Uterus (tissue), 4 donors: ENCODE measurements at regions of chr15 and their contacts with region 1.

Region 1: GRCh38 chr15:73972984-73973682 is 19.0 kb downstream of the STOML1 start:
- DNase-seq: peak; percentile 86 to 88
- H3K4me3 ChIP-seq: no peak overlapping the region
- H3K27ac ChIP-seq: no peak overlapping the region
- H3K4me1 ChIP-seq: peaks cover 0 to 8% of the 10 kb centered on the region in 2 donors
- H3K27me3 ChIP-seq: no peaks in the 10 kb centered on the region
- CTCF ChIP-seq: peak; percentile 88 to 97 (median 93)
- POLR2A ChIP-seq: no peak

Region 2: DNA sequence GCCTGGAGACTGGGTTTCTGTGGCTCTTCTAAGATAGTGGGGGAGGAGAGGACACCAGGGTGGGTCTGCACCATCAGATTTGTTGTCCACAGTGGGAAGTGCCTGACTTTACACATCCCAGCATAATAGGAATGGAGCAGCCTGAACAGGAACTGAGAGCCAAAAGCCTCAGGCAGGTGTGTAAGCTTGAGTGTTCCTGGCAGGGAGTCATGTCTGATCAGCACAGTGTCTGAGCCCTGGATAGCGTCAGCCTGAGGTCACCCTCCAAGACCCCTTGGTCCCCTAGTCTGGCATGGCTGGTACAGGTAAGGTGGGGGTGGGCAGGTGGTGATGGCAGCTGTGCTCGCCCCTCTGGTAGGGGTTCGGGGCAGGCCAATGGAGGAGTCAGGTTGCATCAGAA is 240.2 kb before region 1 on chr15:
- intact Hi-C with region 1: no loop called
- DNase-seq: no peak
- H3K4me3 ChIP-seq: no peak overlapping the region
- H3K27ac ChIP-seq: no peak overlapping the region
- H3K4me1 ChIP-seq: no peaks in the 10 kb centered on the region
- H3K27me3 ChIP-seq: no peaks in the 10 kb centered on the region
- CTCF ChIP-seq: no peak
- POLR2A ChIP-seq: no peak

Region 3: GRCh38 chr15:74036271-74037170 is 63.4 kb after region 1 on chr15:
- intact Hi-C with region 1: loop called (anchors 10 kb)
- DNase-seq: peak; percentile 78 to 83
- H3K4me3 ChIP-seq: no peak overlapping the region
- H3K27ac ChIP-seq: peak overlapping the region; percentile 19 to 36
- H3K4me1 ChIP-seq: peaks cover 0 to 11% of the 10 kb centered on the region in 2 donors
- H3K27me3 ChIP-seq: no peaks in the 10 kb centered on the region
- CTCF ChIP-seq: peak; percentile 54 to 76 (median 64)
- POLR2A ChIP-seq: no peak